ENCODE measurements at regions of chr1 and their contacts with region 1.

Region 1: DNA sequence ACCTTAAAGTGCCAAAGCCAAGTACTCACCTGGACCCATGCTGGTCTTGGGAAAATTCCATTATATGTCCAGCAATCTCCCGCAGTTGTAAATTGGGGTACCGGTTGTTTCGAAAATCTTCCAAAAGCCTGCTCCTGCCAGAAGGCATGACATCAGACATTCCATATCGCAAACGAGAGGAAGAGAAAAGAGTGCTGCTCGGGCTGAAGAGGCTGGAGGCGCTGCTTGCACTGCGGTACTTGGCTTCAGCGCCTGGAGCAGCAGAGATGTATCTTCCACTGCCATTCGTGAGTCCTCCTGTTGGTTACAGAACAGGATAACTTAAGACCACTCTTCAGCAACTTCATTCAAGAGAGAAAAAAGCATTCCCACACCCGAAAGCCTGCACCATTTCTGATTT is 45.1 kb upstream of the SDC3 start:
- DNase-seq: peak in 1 of 10 donors; percentile 14
- H3K4me3 ChIP-seq: no peak overlapping the region
- H3K27ac ChIP-seq: no peak overlapping the region
- H3K27me3 ChIP-seq: no peaks in the 10 kb centered on the region
- CTCF ChIP-seq: no peak

Region 2: GRCh38 chr1:30864681-30865080 is 89.0 kb before region 1 on chr1:
- intact Hi-C with region 1: no loop called
- DNase-seq: no peak
- H3K4me3 ChIP-seq: no peak overlapping the region
- H3K27ac ChIP-seq: peak overlapping the region in 1 of 59 donors; percentile 8
- H3K27me3 ChIP-seq: no peaks in the 10 kb centered on the region
- CTCF ChIP-seq: no peak

Region 3: DNA sequence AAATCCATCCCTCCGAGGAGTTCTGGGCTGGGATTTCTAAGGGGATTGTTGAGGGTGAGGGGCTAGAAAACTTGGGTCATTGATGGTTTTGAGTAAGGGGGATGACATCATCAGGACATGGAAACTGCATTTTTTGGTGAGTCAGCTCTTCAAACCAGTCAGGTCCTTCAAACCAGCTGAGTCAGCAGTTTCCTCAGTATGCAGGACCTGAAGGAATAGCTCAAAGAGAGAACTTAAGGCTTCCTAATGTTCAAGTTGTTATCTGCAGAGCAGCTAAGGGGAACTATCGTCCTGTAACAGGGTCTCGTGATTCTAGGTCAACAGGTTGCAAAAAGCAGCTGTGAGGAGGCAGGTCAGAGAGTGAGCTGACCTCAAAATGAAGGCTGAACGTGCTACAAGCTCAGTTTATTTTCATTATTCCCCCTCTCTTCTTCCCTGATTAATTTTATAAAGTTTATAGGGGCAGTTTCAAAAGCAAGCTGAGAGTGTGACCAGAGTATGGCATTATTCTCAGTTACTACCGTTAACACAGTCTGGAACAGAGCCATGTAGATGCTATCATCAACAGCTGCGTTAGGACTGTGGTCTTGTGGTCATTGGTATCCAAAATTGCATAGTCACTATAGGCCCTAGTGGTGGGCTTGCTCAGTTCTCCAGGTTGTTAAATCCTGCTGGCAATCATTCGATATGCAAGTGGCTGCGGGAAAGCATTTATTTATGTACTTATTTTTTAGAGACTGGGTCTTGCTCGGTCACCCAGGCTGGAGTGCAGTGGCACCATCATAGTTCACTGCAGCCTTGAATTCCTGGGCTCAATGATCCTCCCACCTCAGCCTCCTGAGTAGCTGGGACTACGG is 34.4 kb before region 1 on chr1:
- intact Hi-C with region 1: loop called in 1 of 2 experiments (anchors 1 kb)
- DNase-seq: no peak
- H3K4me3 ChIP-seq: no peak overlapping the region
- H3K27ac ChIP-seq: no peak overlapping the region
- H3K27me3 ChIP-seq: no peaks in the 10 kb centered on the region
- CTCF ChIP-seq: no peak